ENCODE measurements at regions of chr18 and their contacts with region 1.

Region 1: GRCh38 chr18:50356036-50356945 is 18.6 kb upstream of the SKA1 start:
- DNase-seq: no peak
- ATAC-seq: peak; percentile 74
- H3K4me3 Mint-ChIP-seq: no peak overlapping the region
- H3K27ac Mint-ChIP-seq: no peak overlapping the region
- H3K4me1 Mint-ChIP-seq: peaks cover 11% of the 10 kb centered on the region
- H3K27me3 Mint-ChIP-seq: peaks cover 28% of the 10 kb centered on the region
- CTCF ChIP-seq: no peak

Region 2: GRCh38 chr18:50218432-50219197 is 137.7 kb before region 1 on chr18:
- CTCF ChIA-PET with region 1: interaction called, 37 read pairs
- POLR2A ChIA-PET with region 1: no interaction called
- DNase-seq: peak; percentile 32
- ATAC-seq: peak; percentile 85
- H3K4me3 Mint-ChIP-seq: no peak overlapping the region
- H3K27ac Mint-ChIP-seq: no peak overlapping the region
- H3K4me1 Mint-ChIP-seq: peaks cover 3% of the 10 kb centered on the region; the same call in 1 of the 2 replicates
- H3K27me3 Mint-ChIP-seq: peaks cover 8% of the 10 kb centered on the region
- CTCF ChIP-seq: peak; percentile 11; the same call in 1 of the 2 replicates

Region 3: DNA sequence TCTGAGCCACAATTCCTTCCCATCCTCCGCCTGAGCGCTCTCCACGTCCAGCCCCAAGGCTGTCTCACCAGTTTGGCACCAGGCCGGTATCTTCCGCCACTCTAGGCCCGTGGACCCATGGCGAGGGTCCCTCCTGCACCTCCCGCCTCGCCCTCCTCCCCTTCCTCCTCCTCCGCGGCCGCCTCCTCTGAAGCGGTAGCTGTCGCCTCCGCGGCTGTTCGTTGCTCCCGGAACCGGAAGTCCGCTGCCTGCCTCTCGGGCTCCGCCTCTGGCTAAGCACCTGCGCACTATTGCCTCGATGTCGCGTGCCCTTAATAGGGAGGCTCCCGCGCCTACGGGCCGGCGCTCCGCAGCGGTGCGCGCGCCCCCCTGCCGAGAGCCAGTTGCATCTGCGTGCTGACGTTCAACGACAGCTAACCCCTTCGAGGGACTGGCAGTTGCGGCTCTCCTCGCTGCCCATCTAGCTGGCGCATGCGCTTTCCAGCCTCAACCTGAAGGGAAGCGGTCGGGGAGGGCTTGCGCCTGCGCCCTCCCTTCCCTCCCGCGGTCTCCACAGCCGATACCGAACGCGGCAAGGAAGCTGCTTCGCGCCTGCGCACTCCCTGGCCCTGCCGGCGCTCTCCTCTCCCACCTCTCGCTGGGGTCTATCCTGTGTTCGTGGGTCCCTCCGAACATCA is 74.9 kb before region 1 on chr18 and contains the start of gene MBD1:
- CTCF ChIA-PET with region 1: interaction called, 21 read pairs
- POLR2A ChIA-PET with region 1: interaction called, 4 read pairs
- DNase-seq: peak; percentile 93
- ATAC-seq: peak; percentile 87
- H3K4me3 Mint-ChIP-seq: peak within 1 kb of the TSS; percentile 98
- H3K27ac Mint-ChIP-seq: peak within 1 kb of the TSS; percentile 97
- H3K4me1 Mint-ChIP-seq: peaks cover 20% of the 10 kb centered on the region
- H3K27me3 Mint-ChIP-seq: no peaks in the 10 kb centered on the region
- CTCF ChIP-seq: no peak
- total RNA-seq, gene MBD1: 47.6 to 53.4 TPM (median 48.4 TPM) in 3 replicates

Region 4: GRCh38 chr18:50340078-50340477 is 16.2 kb before region 1 on chr18:
- CTCF ChIA-PET with region 1: interaction called, 13 read pairs
- POLR2A ChIA-PET with region 1: no interaction called
- DNase-seq: peak; percentile 80
- ATAC-seq: peak; percentile 96
- H3K4me3 Mint-ChIP-seq: no peak overlapping the region
- H3K27ac Mint-ChIP-seq: no peak overlapping the region
- H3K4me1 Mint-ChIP-seq: no peaks in the 10 kb centered on the region
- H3K27me3 Mint-ChIP-seq: peaks cover 5% of the 10 kb centered on the region; the same call in 1 of the 2 replicates
- CTCF ChIP-seq: peak; percentile 60

Region 5: GRCh38 chr18:50401888-50402287 is 45.6 kb after region 1 on chr18:
- CTCF ChIA-PET with region 1: interaction called, 17 read pairs
- POLR2A ChIA-PET with region 1: no interaction called
- DNase-seq: peak; percentile 77
- ATAC-seq: peak; percentile 84
- H3K4me3 Mint-ChIP-seq: peak overlapping the region; percentile 52; the same call in 1 of the 2 replicates
- H3K27ac Mint-ChIP-seq: no peak overlapping the region
- H3K4me1 Mint-ChIP-seq: peaks cover 95% of the 10 kb centered on the region
- H3K27me3 Mint-ChIP-seq: peaks cover 67% of the 10 kb centered on the region
- CTCF ChIP-seq: no peak

Measured in WTC11 (cell line).